WTC11 (cell line): ENCODE measurements at regions of chr17 and their contacts with region 1.

Region 1: DNA sequence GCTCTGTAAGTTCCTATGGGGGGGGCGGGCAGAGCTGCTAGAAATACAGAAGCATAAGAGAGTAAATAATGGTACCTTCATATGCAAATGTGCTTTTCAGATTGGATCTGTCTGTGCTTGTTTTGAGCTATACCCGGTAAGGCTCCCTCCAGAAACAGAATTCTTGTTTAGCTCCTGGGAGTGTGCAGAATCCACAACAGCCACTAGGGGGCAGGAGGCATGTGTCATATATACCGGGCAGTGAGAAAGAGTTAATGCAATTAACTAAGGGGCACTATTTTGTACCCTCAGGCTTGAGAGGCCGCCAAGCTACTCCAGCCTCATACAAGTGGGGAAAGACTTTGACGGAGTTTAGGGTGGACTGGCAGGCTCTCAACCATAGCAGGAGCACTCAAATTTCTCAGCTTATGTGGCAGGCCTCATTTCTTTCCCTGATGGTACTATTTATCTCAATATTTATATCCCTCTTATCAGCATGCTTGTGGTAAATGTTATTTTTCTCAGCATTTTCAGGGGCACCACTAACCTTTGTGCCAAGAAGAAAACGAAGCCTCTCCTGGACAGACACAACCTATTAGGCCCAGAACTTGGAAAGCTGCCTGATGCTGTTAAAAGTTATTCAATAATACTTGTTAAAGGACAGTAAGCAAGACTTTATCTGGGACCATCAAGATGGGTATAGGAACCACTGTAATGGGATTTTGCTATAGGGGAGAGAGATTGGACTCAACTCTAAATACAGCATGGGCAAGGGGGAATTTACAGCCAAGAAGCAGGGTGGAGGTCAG is 10.7 kb upstream of the CENPV start:
- DNase-seq: peak; percentile 85
- ATAC-seq: peak; percentile 98
- H3K4me3 Mint-ChIP-seq: no peak overlapping the region
- H3K27ac Mint-ChIP-seq: no peak overlapping the region
- H3K4me1 Mint-ChIP-seq: 0 out of 2 replicates have a peak, but pooled peaks cover 3% of the 10 kb centered on the region
- H3K27me3 Mint-ChIP-seq: peaks cover 3% of the 10 kb centered on the region; the same call in 1 of the 2 replicates
- CTCF ChIP-seq: peak; percentile 85

Region 2: DNA sequence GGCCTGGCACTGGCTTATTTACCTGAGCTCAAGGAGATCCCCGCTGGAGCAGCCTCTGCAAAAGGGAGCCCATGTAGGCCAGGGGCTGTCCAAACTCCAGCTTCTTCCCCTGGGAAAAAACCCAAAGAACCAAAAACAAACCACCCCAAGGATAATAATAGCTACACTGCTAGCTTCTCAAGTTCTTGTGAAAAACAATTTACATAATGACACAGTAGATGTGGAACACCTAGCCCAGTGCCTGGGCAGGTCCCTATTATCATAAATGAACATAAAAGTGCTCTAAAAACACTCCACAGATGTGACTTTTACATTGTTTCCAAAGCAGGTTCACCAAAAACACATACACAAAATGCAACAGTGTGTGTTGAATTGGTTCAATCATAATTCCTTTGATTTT is 38.0 kb before region 1 on chr17:
- CTCF ChIA-PET with region 1: interaction called, 15 read pairs
- POLR2A ChIA-PET with region 1: no interaction called
- DNase-seq: no peak
- ATAC-seq: no peak
- H3K4me3 Mint-ChIP-seq: no peak overlapping the region
- H3K27ac Mint-ChIP-seq: no peak overlapping the region
- H3K4me1 Mint-ChIP-seq: peaks cover 2% of the 10 kb centered on the region; the same call in 1 of the 2 replicates
- H3K27me3 Mint-ChIP-seq: no peaks in the 10 kb centered on the region
- CTCF ChIP-seq: no peak

Region 3: DNA sequence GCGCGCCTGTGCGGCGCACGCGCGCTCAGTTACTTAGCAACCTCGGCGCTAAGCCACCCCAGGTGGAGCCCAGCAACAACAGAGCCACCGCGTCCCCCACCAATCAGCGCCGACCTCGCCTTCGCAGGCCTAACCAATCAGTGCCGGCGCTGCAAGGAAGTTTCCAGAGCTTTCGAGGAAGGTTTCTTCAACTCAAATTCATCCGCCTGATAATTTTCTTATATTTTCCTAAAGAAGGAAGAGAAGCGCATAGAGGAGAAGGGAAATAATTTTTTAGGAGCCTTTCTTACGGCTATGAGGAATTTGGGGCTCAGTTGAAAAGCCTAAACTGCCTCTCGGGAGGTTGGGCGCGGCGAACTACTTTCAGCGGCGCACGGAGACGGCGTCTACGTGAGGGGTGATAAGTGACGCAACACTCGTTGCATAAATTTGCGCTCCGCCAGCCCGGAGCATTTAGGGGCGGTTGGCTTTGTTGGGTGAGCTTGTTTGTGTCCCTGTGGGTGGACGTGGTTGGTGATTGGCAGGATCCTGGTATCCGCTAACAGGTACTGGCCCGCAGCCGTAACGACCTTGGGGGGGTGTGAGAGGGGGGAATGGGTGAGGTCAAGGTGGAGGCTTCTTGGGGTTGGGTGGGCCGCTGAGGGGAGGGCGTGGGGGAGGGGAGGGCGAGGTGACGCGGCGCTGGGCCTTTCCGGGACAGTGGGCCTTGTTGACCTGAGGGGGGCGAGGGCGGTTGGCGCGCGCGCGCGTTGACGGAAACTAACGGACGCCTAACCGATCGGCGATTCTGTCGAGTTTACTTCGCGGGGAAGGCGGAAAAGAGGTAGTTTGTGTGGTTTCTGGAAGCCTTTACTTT is 16.9 kb after region 1 on chr17 and contains the start of gene UBB:
- CTCF ChIA-PET with region 1: interaction called, 78 read pairs
- POLR2A ChIA-PET with region 1: interaction called, 7 read pairs
- DNase-seq: peak; percentile 97
- ATAC-seq: peak; percentile 95
- H3K4me3 Mint-ChIP-seq: peak within 1 kb of the TSS; percentile 91
- H3K27ac Mint-ChIP-seq: peak within 1 kb of the TSS; percentile 98
- H3K4me1 Mint-ChIP-seq: peaks cover 25% of the 10 kb centered on the region
- H3K27me3 Mint-ChIP-seq: no peaks in the 10 kb centered on the region
- CTCF ChIP-seq: no peak
- total RNA-seq, gene UBB: 1,216 to 1,403 TPM (median 1,352 TPM) in 3 replicates

Region 4: DNA sequence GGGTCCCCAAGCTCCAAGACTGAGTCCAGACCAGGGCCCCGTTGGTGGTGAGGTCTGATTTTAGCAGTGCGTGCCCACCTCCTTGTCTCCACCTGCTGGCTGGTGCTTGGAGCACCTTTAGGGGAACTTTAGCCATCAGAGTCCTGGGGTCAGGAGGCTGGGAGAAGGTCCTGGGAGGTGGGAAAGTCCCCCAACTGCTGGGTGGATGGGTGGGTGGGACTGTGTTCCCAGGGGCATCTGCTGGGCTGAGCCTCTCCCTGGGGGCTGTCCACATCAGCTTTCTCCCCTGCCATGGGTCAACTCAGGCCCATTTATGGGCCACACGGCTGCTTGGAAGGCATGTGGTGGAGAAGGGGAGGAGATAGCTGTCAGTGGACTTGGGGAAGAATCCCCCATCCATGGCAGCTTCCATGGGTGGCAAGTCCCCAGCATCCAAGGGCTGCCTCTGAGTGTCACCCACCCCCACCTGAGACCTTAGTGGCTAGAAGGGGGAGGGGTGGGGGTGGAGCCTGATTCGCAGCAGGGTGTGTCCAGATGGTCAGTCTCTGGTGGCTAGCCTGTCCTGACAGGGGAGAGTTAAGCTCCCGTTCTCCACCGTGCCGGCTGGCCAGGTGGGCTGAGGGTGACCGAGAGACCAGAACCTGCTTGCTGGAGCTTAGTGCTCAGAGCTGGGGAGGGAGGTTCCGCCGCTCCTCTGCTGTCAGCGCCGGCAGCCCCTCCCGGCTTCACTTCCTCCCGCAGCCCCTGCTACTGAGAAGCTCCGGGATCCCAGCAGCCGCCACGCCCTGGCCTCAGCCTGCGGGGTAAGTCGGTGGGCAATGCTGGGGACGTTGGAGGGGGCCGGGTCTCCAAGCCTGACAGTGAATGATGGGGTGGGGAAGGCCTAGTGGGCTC is 51.3 kb after region 1 on chr17 and contains the start of gene TRPV2:
- CTCF ChIA-PET with region 1: interaction called, 96 read pairs
- POLR2A ChIA-PET with region 1: no interaction called
- DNase-seq: peak; percentile 62
- ATAC-seq: peak; percentile 87
- H3K4me3 Mint-ChIP-seq: no peak within 1 kb of the TSS; the same call in 1 of the 2 replicates
- H3K27ac Mint-ChIP-seq: no peak within 1 kb of the TSS
- H3K4me1 Mint-ChIP-seq: peaks cover 27% of the 10 kb centered on the region
- H3K27me3 Mint-ChIP-seq: no peaks in the 10 kb centered on the region; the same call in 1 of the 2 replicates
- CTCF ChIP-seq: peak; percentile 23; the same call in 1 of the 2 replicates
- total RNA-seq, gene TRPV2: 3.5 to 4.9 TPM (median 4.3 TPM) in 3 replicates

Region 5: GRCh38 chr17:16438557-16439302 is 74.8 kb after region 1 on chr17:
- CTCF ChIA-PET with region 1: interaction called, 19 read pairs
- POLR2A ChIA-PET with region 1: interaction called, 4 read pairs
- DNase-seq: peak; percentile 95
- ATAC-seq: peak; percentile 64
- H3K4me3 Mint-ChIP-seq: peak overlapping the region; percentile 99
- H3K27ac Mint-ChIP-seq: peak overlapping the region; percentile 100
- H3K4me1 Mint-ChIP-seq: peaks cover 66% of the 10 kb centered on the region
- H3K27me3 Mint-ChIP-seq: no peaks in the 10 kb centered on the region; the same call in 1 of the 2 replicates
- CTCF ChIP-seq: no peak

Region 6: DNA sequence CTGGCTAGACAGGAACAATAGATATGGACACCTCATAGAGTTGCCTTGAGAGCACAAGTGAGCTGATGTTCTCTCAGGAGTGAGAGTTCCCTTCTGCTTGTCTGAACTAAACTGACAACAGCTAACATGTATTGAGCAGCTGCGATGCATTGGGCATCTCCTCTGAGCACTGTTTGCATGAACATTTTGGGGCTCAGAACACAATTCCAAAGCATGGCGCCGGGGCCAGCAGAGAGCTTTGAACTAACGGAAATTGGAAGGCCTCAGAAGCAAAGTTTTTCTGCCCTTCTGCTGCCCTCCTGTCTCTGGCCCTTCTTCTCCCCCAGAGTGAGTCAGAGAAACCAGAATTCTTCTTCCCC is 89.5 kb after region 1 on chr17:
- CTCF ChIA-PET with region 1: interaction called, 28 read pairs
- POLR2A ChIA-PET with region 1: no interaction called
- DNase-seq: no peak
- ATAC-seq: no peak
- H3K4me3 Mint-ChIP-seq: no peak overlapping the region
- H3K27ac Mint-ChIP-seq: peak overlapping the region; percentile 73
- H3K4me1 Mint-ChIP-seq: peaks cover 16% of the 10 kb centered on the region
- H3K27me3 Mint-ChIP-seq: no peaks in the 10 kb centered on the region
- CTCF ChIP-seq: no peak; the same call in 1 of the 2 replicates

Region 7: DNA sequence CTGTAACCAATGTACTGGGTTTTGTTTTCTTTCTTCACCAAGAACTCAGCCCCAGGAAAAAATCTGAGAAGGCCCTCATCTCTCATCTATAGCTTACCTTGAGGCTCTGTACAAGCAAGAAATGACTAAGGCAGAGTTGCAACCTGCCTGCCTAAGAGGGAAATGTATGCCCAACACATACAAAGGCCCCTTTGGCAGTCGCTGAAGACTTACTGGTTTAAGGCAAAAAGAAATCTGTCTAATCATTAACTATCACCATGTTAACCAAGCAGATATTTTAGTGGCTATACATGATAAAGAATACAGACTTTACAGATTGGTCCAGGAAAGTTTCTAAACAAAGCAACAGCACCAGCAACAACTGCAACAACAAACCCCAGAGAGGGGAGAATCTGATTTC is 275.5 kb after region 1 on chr17:
- CTCF ChIA-PET with region 1: no interaction called
- POLR2A ChIA-PET with region 1: no interaction called
- DNase-seq: no peak
- ATAC-seq: no peak
- H3K4me3 Mint-ChIP-seq: no peak overlapping the region
- H3K27ac Mint-ChIP-seq: no peak overlapping the region
- H3K4me1 Mint-ChIP-seq: no peaks in the 10 kb centered on the region
- H3K27me3 Mint-ChIP-seq: peaks cover 2% of the 10 kb centered on the region; the same call in 1 of the 2 replicates
- CTCF ChIP-seq: no peak